ENCODE measurements at regions of chr3 and their contacts with region 1.

Region 1: DNA sequence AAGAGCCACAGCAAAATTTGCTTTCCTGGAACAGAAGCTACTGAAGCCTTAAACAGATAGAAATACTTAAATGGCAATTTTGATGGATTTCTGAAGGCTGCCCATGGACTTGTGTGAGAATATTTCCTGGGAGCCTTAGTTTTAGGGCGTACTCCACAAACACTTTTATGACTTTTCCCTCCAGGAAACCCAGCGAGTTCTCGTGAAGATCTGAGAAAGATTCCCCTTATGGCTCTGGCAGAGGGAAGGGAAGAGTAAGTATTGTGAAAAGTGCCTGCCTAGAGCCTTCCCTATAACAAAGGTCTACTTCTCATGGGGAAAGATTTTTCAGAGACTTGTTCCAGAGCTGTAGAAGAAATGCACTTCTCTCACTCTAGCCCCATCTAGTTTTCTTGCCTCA is 31.1 kb upstream of the TRAT1 start:
- DNase-seq: no peak
- H3K4me3 ChIP-seq: no peak overlapping the region
- H3K27ac ChIP-seq: no peak overlapping the region
- H3K4me1 ChIP-seq: no peaks in the 10 kb centered on the region
- H3K27me3 ChIP-seq: no peaks in the 10 kb centered on the region
- CTCF ChIP-seq: no peak

Region 2: DNA sequence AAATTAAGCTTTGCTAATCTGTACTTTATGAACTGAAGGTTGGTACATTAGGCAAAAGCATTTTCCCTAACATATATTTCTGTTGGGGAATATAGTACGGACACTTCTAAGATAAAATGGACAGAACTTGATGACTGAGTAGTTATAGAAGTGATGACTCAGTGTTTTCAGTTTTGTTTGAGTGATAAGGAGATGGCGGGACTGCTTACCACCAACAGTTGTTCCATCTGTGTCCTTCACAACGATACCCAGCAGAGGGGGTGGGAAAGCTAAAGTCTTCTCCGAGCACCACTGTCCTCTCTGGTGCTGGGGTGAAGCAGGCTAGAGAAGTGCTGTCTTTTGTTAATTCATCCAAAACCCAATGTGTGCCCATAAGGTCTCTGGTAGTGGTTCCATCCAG is 896.5 kb before region 1 on chr3:
- CTCF ChIA-PET with region 1: interaction called, 14 read pairs
- POLR2A ChIA-PET with region 1: no interaction called
- intact Hi-C with region 1: no loop called
- DNase-seq: no peak
- H3K4me3 ChIP-seq: no peak overlapping the region
- H3K27ac ChIP-seq: no peak overlapping the region
- H3K4me1 ChIP-seq: no peaks in the 10 kb centered on the region
- H3K27me3 ChIP-seq: peaks cover 58% of the 10 kb centered on the region
- CTCF ChIP-seq: no peak

Measured in A673 (cell line).